Activated CD4-positive, alpha-beta memory T cell treated with anti-CD3 and anti-CD28 coated beads for 36 hours (primary cell): ENCODE measurements at regions of chr18 and their contacts with region 1.

Region 1: DNA sequence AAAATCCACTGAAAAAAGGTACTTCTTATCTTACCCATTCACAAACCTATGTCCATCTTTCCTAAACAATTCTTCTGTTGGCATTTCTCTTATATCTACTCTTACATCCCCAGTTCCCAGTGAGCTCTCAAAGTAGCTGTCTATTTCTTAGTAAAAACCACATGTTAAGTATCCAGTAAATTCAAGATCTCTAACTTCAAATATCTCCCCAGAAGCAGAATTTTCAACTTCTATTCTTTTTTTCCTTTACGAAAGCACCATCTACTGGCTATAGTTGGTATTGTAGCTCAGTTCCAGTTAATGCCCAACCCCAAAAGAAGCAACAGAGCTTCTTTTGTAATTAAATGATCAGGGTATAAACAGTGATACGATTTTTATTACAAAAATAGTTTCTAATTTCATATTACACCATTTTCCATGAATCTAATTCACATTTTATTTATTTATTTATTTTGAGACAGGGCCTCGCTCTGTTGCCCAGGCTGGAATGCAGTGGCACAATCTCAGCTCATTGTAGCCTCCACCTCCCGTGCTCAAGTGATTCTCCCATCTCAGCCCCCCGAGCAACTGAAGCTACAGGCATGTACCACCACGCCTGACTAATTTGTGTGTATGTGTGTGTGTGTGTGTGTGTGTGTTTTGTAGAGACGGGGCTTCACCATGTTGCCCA is 28.5 kb downstream of the HRH4 start:
- DNase-seq: no peak
- H3K4me3 Mint-ChIP-seq: no peak overlapping the region
- H3K27ac Mint-ChIP-seq: no peak overlapping the region
- H3K4me1 Mint-ChIP-seq: peaks cover 18% of the 10 kb centered on the region
- H3K27me3 Mint-ChIP-seq: peaks cover 13% of the 10 kb centered on the region

Region 2: DNA sequence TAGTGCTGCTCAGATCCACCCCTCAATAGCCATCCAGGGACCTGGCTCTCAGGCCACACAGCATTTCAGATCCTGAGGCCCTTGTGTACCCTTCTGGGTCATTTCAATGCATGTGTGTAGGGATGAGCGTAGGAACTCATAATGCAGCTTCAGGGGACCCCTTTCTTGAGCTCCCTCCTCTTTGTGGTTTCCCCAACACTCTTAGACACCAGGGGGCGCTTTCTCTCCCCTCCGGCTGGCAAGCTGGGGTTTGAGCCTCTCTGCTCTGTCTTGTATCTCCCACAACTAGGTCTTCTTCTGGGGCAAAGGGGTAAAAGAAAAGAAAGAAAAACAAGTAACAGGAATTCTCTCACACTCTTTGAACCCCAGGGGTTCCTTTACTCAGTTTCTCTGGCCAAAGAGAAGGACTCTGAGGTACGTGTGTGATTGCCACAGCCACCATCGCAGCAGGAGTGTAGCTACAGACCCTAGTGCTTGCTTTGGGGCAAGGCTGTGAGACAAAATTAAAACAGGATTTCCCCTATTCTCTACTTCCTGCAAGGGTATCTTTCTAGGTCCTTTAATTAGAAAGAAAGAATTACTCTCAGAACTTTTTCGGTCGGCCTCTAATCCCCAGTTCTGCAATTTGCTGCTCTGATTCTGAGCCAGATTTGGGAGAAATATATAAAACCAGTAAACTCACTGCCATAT is 312.1 kb before region 1 on chr18:
- CTCF ChIA-PET with region 1: interaction called, 71 read pairs
- POLR2A ChIA-PET with region 1: no interaction called
- intact Hi-C with region 1: loop called (anchors 1 kb)
- DNase-seq: peak; percentile 64
- H3K4me3 Mint-ChIP-seq: no peak overlapping the region
- H3K27ac Mint-ChIP-seq: no peak overlapping the region
- H3K4me1 Mint-ChIP-seq: peaks cover 4% of the 10 kb centered on the region
- H3K27me3 Mint-ChIP-seq: no peaks in the 10 kb centered on the region

Region 3: DNA sequence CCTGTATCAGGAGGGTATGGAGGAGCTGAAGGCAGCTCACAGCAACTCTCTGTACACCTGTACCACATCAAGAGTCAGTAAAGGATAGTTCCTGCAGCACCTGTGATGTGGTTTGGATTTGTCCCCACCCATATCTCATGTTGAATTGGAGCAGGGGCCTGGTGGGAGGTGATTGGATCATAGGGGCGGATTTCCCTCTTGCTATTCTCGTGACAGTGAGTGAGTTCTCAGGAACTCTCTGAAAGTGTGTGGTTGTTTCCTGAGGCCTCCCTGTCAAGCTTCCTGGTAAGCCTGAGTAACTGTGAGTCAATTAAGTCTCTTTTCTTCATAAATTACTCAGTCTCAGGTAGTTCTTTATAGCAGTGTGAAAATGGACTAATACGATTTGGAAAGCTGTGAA is 120.2 kb before region 1 on chr18:
- CTCF ChIA-PET with region 1: interaction called, 441 read pairs
- POLR2A ChIA-PET with region 1: interaction called, 3 read pairs
- intact Hi-C with region 1: no loop called
- DNase-seq: peak; percentile 82
- H3K4me3 Mint-ChIP-seq: peak overlapping the region; percentile 6
- H3K27ac Mint-ChIP-seq: peak overlapping the region; percentile 60
- H3K4me1 Mint-ChIP-seq: peaks cover 24% of the 10 kb centered on the region
- H3K27me3 Mint-ChIP-seq: peaks cover 8% of the 10 kb centered on the region

Region 4: GRCh38 chr18:24432618-24433017 is 56.3 kb before region 1 on chr18:
- CTCF ChIA-PET with region 1: interaction called, 18 read pairs
- POLR2A ChIA-PET with region 1: no interaction called
- intact Hi-C with region 1: loop called (anchors 5 kb)
- DNase-seq: no peak
- H3K4me3 Mint-ChIP-seq: no peak overlapping the region
- H3K27ac Mint-ChIP-seq: no peak overlapping the region
- H3K4me1 Mint-ChIP-seq: peaks cover 14% of the 10 kb centered on the region
- H3K27me3 Mint-ChIP-seq: no peaks in the 10 kb centered on the region

Region 5: GRCh38 chr18:24462838-24463775 is 25.9 kb before region 1 on chr18:
- CTCF ChIA-PET with region 1: interaction called, 16 read pairs
- POLR2A ChIA-PET with region 1: no interaction called
- intact Hi-C with region 1: no loop called
- DNase-seq: no peak
- H3K4me3 Mint-ChIP-seq: no peak overlapping the region
- H3K27ac Mint-ChIP-seq: no peak overlapping the region
- H3K4me1 Mint-ChIP-seq: peaks cover 20% of the 10 kb centered on the region
- H3K27me3 Mint-ChIP-seq: peaks cover 3% of the 10 kb centered on the region

Region 6: DNA sequence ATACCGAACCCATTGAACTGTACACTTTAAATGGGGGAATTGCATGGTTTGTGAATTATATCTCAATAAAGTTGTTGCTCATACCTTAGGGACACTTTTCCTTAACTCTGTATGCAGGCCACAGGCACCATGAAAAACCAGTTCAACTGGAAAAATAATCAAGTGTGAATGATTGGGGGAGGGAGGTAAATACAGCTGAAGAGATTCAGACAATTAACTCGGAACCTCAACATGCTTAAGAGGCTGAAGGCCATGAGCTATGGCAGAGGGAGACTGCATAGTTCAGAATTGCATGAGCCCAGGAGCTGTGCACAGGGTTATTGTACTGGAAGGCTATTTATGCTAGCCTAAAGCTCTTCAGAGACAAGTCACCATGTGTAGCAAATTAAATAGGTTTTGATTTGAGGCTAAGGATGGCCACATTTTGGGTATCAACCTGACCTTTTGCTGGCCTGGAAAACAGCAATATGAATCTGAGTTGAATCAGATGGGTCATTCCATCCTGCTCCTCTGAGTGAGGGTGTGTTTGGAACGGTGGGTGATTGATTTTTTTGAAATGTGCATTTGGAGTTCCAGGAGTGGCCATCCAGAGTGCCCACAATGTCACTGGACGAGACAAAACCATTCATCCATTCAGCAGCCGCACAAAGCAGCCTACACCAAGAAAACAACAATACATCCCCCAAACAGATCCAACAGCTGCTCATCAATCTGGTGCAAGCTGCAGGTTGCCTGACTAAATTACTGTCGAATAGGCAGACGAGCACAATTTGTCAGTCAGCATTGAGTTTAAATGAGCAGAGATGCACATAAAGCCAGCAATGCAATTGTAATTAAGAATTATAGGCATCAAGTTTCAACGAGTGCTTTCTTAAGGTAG is 13.9 kb after region 1 on chr18:
- CTCF ChIA-PET with region 1: interaction called, 24 read pairs
- POLR2A ChIA-PET with region 1: no interaction called
- intact Hi-C with region 1: no loop called
- DNase-seq: no peak
- H3K4me3 Mint-ChIP-seq: no peak overlapping the region
- H3K27ac Mint-ChIP-seq: no peak overlapping the region
- H3K4me1 Mint-ChIP-seq: no peaks in the 10 kb centered on the region
- H3K27me3 Mint-ChIP-seq: peaks cover 8% of the 10 kb centered on the region

Region 7: DNA sequence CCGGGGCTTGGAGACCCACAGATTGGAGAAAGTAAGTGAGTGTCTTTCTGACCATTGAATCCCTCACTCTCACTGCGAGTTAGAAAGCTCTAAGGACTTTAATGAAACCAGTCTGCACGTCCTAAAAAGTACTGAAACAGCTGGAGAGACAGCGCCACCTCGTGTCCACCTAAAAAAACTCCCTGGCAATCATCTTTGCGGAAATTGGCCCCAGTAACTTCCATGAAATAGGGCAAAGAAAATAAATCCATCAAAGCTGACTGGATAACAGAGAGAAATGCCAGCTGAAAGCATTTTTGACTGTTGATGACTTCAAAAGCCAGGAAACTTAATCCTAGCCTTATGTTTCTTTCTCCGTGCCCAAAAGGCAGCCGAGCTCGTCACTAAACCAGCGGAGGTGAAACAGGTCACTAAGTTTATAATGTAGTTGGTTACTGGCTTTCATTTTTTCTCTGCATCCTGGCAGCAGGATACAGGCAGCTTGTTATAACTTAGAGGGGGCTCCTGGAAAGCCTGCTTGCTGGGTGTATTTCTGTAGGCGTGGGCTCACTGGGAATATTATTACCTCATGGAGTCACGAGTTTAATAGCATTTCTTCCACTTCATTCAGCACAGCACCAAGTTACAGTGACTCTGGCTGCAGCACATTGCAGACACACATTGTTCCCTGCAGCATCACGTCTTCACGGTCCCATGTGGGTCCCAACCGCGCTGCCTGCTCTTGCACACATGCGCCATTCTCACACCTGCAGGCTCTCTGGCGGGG is 238.0 kb after region 1 on chr18:
- CTCF ChIA-PET with region 1: interaction called, 13 read pairs
- POLR2A ChIA-PET with region 1: no interaction called
- intact Hi-C with region 1: loop called (anchors 1 kb)
- DNase-seq: peak; percentile 63
- H3K4me3 Mint-ChIP-seq: no peak overlapping the region
- H3K27ac Mint-ChIP-seq: no peak overlapping the region
- H3K4me1 Mint-ChIP-seq: no peaks in the 10 kb centered on the region
- H3K27me3 Mint-ChIP-seq: no peaks in the 10 kb centered on the region